Endothelial cell of umbilical vein (primary cell): ENCODE measurements at regions of chr17 and their contacts with region 1.

Region 1: GRCh38 chr17:28612936-28613872 is 781 bp downstream of the RSKR start:
- DNase-seq: peak; percentile 43
- H3K4me3 ChIP-seq: no peak overlapping the region
- H3K27ac ChIP-seq: no peak overlapping the region
- H3K4me1 ChIP-seq: peaks cover 7% of the 10 kb centered on the region
- H3K27me3 ChIP-seq: no peaks in the 10 kb centered on the region
- CTCF ChIP-seq: peak; percentile 56 to 79
- POLR2A ChIP-seq: peak; percentile 14

Region 2: DNA sequence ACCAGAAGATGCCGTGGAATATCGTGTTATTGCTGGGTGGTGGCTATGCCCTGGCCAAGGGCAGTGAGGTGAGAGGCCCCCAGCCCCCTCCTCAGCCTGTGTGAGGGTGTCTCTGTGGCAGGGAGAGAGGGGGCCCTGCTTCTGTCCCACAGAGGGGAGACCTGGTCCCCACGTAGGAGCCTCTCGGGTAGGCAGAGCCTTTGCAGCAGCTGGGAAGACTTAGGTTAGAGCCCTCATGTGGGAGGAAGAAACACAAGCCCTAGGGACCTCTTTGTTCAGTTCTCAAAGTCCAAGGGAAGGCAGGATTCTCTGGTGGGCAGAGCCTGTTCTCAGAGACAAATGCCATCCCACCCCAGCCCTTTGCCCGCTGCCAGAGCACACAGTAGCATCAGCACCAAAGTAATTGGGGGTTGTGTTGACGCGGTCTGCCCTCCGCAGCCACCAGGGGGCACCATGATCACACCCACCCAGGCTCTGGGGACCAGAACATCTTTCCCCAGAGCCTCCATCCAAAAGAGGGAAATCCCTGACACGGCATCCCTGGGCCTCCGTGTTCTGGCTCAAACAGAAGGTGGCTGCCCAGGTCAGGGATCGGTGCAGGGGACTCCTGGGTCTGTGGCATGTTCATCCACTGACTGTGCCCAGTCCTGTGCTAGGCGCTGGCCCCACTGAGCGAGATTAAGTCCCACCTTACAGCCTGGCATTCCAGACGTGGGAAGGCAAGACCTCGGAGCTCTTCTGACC is 118.6 kb before region 1 on chr17:
- CTCF ChIA-PET with region 1: interaction called, 64 read pairs
- POLR2A ChIA-PET with region 1: no interaction called
- dilution Hi-C with region 1: no loop called
- intact Hi-C with region 1: no loop called
- DNase-seq: peak; percentile 44
- H3K4me3 ChIP-seq: no peak overlapping the region
- H3K27ac ChIP-seq: no peak overlapping the region
- H3K4me1 ChIP-seq: no peaks in the 10 kb centered on the region
- H3K27me3 ChIP-seq: no peaks in the 10 kb centered on the region
- CTCF ChIP-seq: peak; percentile 84 to 95
- POLR2A ChIP-seq: no peak

Region 3: DNA sequence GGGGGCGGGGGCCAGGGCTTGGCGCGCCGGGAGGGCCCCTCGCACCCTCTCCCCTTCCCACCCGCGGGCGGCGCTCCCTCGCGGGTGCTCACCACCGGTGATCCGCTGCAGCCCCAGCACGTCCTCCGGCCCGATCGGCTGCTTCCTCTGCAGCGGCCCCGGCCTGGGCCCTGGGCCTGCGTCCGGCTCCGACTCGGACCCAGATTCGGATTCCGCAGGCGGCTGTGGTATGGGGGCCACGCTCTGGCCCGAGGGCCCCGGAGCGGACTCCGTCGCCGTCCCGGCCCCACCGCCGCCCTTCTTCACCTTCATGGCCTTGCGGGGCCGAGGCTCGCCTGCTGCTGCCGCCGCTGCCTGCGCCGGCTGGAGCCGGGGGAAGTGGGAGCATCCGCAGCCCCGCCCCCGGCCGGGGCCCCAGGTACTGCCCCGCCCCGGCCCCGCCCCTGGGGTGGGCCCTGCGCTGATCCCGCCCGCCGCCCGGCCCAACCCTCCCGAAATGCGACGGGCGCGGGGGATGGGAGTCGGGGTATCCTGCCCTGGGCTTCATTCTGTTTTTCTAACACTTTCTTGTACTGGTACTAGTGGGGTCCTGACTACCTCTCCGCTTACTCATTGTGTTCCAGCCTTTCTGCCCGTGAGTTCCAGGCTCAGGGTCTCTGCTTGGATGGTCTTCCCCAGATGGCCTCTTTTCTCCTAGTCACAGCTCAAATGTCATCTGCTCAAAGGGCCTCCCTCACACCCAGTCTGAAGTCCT is 60.8 kb before region 1 on chr17 and contains the start of gene UNC119:
- CTCF ChIA-PET with region 1: interaction called, 10 read pairs
- POLR2A ChIA-PET with region 1: no interaction called
- dilution Hi-C with region 1: no loop called
- intact Hi-C with region 1: loop called (anchors 1 kb)
- DNase-seq: peak; percentile 60
- H3K4me3 ChIP-seq: peak within 1 kb of the TSS; percentile 59 to 77 (median 64)
- H3K27ac ChIP-seq: no peak within 1 kb of the TSS
- H3K4me1 ChIP-seq: peaks cover 6% of the 10 kb centered on the region
- H3K27me3 ChIP-seq: no peaks in the 10 kb centered on the region
- CTCF ChIP-seq: no peak
- POLR2A ChIP-seq: peak; percentile 73
- total RNA-seq, gene UNC119: 26.3 and 28.1 TPM in 2 replicates

Region 4: DNA sequence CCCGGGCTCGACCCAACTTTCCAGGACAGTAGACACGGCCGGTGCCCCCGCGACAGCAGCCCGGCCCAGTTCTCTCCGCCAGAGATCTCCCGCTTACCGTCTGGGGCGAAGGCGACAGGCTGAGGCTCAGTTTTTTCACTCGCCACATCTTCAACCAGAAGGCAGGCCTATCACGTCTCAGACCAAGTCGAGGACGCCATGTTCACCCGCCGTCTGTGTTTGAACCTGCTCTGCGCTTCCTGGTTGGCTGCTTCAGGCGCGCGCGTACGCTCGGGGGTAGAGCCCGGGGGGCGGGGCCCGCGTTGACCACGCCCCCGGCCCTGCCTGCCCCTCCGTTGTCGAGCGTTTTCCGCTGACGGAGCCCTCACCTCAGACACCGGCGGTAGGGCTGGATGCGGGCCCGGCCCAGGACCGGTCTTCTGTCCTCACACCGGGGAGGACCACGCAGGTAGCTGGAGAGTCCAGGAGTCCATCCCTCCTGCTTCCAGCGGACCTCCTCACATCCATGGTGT is 14.3 kb before region 1 on chr17 and contains the start of gene SPAG5:
- CTCF ChIA-PET with region 1: interaction called, 41 read pairs
- POLR2A ChIA-PET with region 1: no interaction called
- dilution Hi-C with region 1: no loop called
- intact Hi-C with region 1: no loop called
- DNase-seq: peak; percentile 97
- H3K4me3 ChIP-seq: peak within 1 kb of the TSS; percentile 61 to 90 (median 68)
- H3K27ac ChIP-seq: peak within 1 kb of the TSS; percentile 95
- H3K4me1 ChIP-seq: peaks cover 18% of the 10 kb centered on the region
- H3K27me3 ChIP-seq: no peaks in the 10 kb centered on the region
- CTCF ChIP-seq: no peak
- POLR2A ChIP-seq: peak; percentile 77
- total RNA-seq, gene SPAG5: 85.4 and 90.6 TPM in 2 replicates

Region 5: GRCh38 chr17:28623696-28624095 is 10.5 kb after region 1 on chr17:
- CTCF ChIA-PET with region 1: interaction called, 21 read pairs
- POLR2A ChIA-PET with region 1: interaction called, 7 read pairs
- dilution Hi-C with region 1: no loop called
- intact Hi-C with region 1: no loop called
- DNase-seq: no peak
- H3K4me3 ChIP-seq: no peak overlapping the region
- H3K27ac ChIP-seq: no peak overlapping the region
- H3K4me1 ChIP-seq: no peaks in the 10 kb centered on the region
- H3K27me3 ChIP-seq: no peaks in the 10 kb centered on the region
- CTCF ChIP-seq: no peak
- POLR2A ChIP-seq: no peak